AG04450 (cell line): ENCODE measurements at regions of chr3 and their contacts with region 1.

Region 1: GRCh38 chr3:19866751-19867347 is 67.2 kb downstream of the EFHB start:
- DNase-seq: no peak
- H3K4me3 ChIP-seq: no peak overlapping the region
- H3K27ac ChIP-seq: no peak overlapping the region
- H3K27me3 ChIP-seq: no peaks in the 10 kb centered on the region
- CTCF ChIP-seq: peak; percentile 84

Region 2: DNA sequence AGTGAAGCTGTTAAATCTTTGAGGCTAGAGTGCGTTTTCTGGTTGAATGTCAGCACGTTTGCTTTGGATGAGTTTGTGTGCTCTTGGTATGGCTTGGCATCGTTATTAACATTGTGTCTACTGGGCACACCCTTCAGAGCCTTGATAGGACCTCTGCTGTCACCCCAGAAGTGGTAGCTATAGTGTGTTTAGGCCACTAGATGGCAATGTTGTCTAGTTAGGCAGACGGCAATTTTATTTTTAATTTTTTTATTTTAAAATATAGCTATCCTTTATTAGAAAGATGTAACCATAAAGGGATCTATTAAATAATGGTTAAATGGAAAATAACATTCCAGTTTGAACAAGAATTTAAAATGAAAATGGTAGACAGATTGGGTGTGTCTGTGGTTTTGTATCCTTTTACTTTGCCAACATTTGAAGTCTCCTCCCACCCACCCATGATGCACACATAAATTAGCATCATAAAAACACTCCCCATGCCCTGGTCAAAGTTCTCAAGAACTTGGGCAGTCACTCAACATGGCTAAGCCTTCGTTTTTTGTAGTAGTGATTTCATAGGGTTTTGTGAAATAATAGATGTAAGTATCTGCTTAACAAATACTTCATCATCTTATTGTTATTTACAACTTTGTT is 517.8 kb before region 1 on chr3:
- CTCF ChIA-PET with region 1: interaction called, 18 read pairs
- POLR2A ChIA-PET with region 1: no interaction called
- DNase-seq: no peak
- H3K4me3 ChIP-seq: no peak overlapping the region
- H3K27ac ChIP-seq: no peak overlapping the region
- H3K27me3 ChIP-seq: no peaks in the 10 kb centered on the region
- CTCF ChIP-seq: 0 out of 2 replicates have a peak, but pooled peaks have one; percentile 16

Region 3: DNA sequence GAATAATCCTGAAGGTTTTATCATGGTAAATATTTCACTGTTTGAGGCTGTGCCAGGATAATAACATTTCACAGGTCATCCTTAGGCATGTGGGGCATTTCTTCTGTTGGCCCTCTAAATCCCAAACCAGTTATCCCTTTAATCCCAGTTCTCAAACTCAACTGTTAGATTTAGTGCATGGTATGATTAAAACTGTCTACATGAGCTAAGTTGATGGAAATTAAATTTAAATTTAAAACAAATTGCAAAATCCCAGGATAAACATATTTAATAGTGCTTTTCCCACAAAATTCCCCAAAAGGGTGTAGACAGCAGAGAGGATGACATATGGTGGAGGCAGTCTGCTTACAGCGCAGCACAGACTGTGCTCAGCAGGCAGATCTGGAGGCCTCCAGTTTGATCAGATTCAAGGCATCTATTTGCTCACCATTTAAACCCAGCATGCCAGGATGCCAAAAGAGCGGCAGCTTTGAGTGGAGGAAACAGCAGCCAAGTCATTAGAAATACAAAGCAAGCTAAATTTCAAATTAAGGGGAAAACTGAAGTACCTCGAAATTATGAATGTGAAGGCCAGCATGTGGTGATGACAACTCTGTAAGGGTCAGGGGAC is 392.8 kb before region 1 on chr3:
- CTCF ChIA-PET with region 1: no interaction called
- POLR2A ChIA-PET with region 1: no interaction called
- DNase-seq: no peak
- H3K4me3 ChIP-seq: no peak overlapping the region
- H3K27ac ChIP-seq: no peak overlapping the region
- H3K27me3 ChIP-seq: no peaks in the 10 kb centered on the region
- CTCF ChIP-seq: no peak

Region 4: GRCh38 chr3:19506171-19506570 is 360.7 kb before region 1 on chr3:
- CTCF ChIA-PET with region 1: no interaction called
- POLR2A ChIA-PET with region 1: no interaction called
- DNase-seq: no peak
- H3K4me3 ChIP-seq: no peak overlapping the region
- H3K27ac ChIP-seq: no peak overlapping the region
- H3K27me3 ChIP-seq: no peaks in the 10 kb centered on the region
- CTCF ChIP-seq: no peak

Region 5: DNA sequence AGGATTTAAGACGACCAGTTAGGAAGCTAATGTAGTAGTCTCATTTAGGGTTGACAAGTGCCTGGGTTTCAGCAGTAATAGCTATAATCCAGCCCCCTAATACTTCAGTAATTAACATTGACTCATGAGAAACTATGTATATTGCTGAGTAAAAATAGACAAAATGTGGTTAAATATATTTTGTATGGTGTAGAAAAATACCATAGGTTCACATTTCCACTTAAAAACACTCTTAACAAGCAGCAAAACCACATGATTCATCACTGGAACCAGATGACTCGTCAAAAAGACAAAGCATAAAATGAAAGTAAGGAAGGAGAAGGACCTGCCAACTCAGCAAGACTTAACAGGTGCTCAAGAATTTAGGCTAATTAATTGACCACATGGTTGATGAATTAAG is 221.8 kb before region 1 on chr3:
- CTCF ChIA-PET with region 1: no interaction called
- POLR2A ChIA-PET with region 1: no interaction called
- DNase-seq: no peak
- H3K4me3 ChIP-seq: no peak overlapping the region
- H3K27ac ChIP-seq: no peak overlapping the region
- H3K27me3 ChIP-seq: no peaks in the 10 kb centered on the region
- CTCF ChIP-seq: no peak

Region 6: DNA sequence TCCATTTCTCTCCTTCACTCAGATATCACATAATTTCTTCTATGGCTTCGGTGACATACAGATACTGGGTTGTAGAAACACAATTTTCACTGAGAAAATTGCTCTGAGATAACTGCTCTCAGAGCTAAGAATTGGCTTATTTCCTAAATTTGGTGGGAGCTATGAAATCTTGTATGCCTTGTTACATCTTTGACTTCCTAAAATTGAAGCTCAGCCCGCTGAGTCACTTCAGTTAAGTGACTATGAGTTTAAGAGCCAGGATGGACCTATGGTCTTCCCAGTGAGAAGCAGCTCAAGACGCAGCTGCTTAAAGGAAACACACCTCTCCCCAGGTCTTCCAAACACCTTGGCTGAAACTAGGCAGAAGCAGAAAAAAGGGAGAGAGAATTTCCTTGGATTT is 10.8 kb after region 1 on chr3:
- CTCF ChIA-PET with region 1: interaction called, 36 read pairs
- POLR2A ChIA-PET with region 1: no interaction called
- DNase-seq: no peak
- H3K4me3 ChIP-seq: no peak overlapping the region
- H3K27ac ChIP-seq: no peak overlapping the region
- H3K27me3 ChIP-seq: no peaks in the 10 kb centered on the region
- CTCF ChIP-seq: no peak